B cell (primary cell): ENCODE measurements at regions of chr9 and their contacts with region 1.

Region 1: DNA sequence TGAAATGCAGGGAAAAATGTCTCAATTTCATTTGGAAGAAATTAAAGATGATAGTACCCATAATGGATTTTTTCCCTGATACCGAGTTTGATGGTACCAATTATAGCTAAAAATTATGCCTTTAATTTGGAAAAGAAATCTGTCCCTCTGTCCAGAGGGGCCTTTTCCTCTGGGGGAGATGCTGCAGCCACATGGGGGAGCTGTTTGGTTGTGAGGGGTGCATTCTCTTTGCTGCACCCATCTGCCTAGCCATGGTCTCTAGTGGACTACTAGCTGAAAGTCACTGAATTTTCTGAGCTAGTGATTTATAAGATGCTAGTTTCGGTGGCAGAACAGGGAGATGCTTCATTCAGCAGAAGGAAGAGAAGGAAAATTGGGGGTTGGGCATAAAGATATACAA is 9.6 kb downstream of the SEC61B start:
- DNase-seq: peak; percentile 52
- ATAC-seq: no peak
- H3K4me3 ChIP-seq: no peak overlapping the region
- H3K4me3 Mint-ChIP-seq: no peak overlapping the region
- H3K27ac ChIP-seq: no peak overlapping the region
- H3K27ac Mint-ChIP-seq: no peak overlapping the region
- H3K4me1 ChIP-seq: peaks cover 21 to 23% of the 10 kb centered on the region in 2 donors
- H3K4me1 Mint-ChIP-seq: peaks cover 29% of the 10 kb centered on the region
- H3K27me3 ChIP-seq: no peaks in the 10 kb centered on the region
- H3K27me3 Mint-ChIP-seq: no peaks in the 10 kb centered on the region
- CTCF ChIP-seq: peak; percentile 75

Region 2: GRCh38 chr9:99197987-99198386 is 33.7 kb before region 1 on chr9:
- CTCF ChIA-PET with region 1: interaction called, 10 read pairs
- POLR2A ChIA-PET with region 1: no interaction called
- intact Hi-C with region 1: no loop called
- DNase-seq: no peak
- ATAC-seq: no peak
- H3K4me3 ChIP-seq: no peak overlapping the region
- H3K4me3 Mint-ChIP-seq: no peak overlapping the region
- H3K27ac ChIP-seq: no peak overlapping the region
- H3K27ac Mint-ChIP-seq: no peak overlapping the region
- H3K4me1 ChIP-seq: no peaks in the 10 kb centered on the region
- H3K4me1 Mint-ChIP-seq: peaks cover 8% of the 10 kb centered on the region
- H3K27me3 ChIP-seq: no peaks in the 10 kb centered on the region
- H3K27me3 Mint-ChIP-seq: no peaks in the 10 kb centered on the region
- CTCF ChIP-seq: no peak

Region 3: DNA sequence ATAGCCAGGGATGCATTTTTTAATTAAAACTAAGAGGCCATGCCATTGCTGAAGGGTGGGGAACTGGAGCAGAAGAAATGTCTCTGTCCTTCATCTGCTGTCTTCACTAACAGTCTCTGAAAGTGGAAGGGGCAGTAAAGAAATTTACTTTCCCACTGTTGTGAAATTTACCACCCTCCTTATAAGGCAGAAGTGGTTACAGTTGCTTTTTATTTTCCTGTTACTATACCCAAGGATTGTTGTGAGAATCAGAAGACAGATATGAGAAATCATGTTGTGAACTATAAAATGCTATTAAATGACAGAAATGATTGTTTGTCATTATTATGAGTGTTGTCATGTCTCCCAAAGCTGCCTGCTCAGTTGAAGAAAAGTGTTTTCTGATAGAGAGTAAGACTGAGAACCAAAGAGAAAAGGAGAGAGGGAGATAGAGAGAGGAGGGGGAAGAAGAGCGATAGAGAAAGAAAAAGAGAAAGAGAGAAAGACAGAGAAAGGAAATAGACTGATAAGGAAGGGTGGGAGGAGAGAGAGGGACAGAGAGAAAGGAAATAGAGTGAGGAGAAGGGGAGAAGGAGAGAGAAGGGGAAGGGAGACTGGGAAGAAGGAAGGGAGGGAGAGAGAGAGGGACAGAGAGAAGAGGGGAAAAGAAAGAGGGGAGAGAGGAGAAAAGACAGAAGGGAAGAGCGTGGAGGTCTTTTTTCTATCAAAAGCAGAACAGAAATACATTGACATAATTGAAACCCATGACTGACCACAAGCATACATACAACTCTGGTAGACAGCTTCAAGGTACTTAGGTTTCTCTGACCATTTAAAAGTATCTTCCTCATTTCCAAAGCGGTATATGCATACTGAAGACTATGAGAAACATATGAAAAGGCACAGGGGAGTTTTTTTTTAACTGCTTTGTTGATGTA is 12.9 kb after region 1 on chr9:
- CTCF ChIA-PET with region 1: interaction called, 34 read pairs
- POLR2A ChIA-PET with region 1: no interaction called
- intact Hi-C with region 1: no loop called
- DNase-seq: peak; percentile 55
- ATAC-seq: peak; percentile 87
- H3K4me3 ChIP-seq: no peak overlapping the region
- H3K4me3 Mint-ChIP-seq: peak overlapping the region; percentile 42
- H3K27ac ChIP-seq: peak overlapping the region in 1 of 2 donors; percentile 46
- H3K27ac Mint-ChIP-seq: peak overlapping the region; percentile 46
- H3K4me1 ChIP-seq: peaks cover 4 to 12% of the 10 kb centered on the region in 2 donors
- H3K4me1 Mint-ChIP-seq: peaks cover 16% of the 10 kb centered on the region
- H3K27me3 ChIP-seq: no peaks in the 10 kb centered on the region
- H3K27me3 Mint-ChIP-seq: no peaks in the 10 kb centered on the region
- CTCF ChIP-seq: peak; percentile 28

Region 4: GRCh38 chr9:99259231-99259918 is 27.7 kb after region 1 on chr9:
- CTCF ChIA-PET with region 1: interaction called, 29 read pairs
- POLR2A ChIA-PET with region 1: interaction called, 3 read pairs
- intact Hi-C with region 1: no loop called
- DNase-seq: peak; percentile 51
- ATAC-seq: peak; percentile 57
- H3K4me3 ChIP-seq: peak overlapping the region in 1 of 5 experiments; percentile 17
- H3K4me3 Mint-ChIP-seq: peak overlapping the region; percentile 29
- H3K27ac ChIP-seq: no peak overlapping the region
- H3K27ac Mint-ChIP-seq: peak overlapping the region; percentile 75
- H3K4me1 ChIP-seq: peaks cover 0 to 9% of the 10 kb centered on the region in 2 donors
- H3K4me1 Mint-ChIP-seq: peaks cover 31% of the 10 kb centered on the region
- H3K27me3 ChIP-seq: no peaks in the 10 kb centered on the region
- H3K27me3 Mint-ChIP-seq: no peaks in the 10 kb centered on the region
- CTCF ChIP-seq: no peak

Region 5: GRCh38 chr9:99299211-99300102 is 67.7 kb after region 1 on chr9:
- CTCF ChIA-PET with region 1: interaction called, 10 read pairs
- POLR2A ChIA-PET with region 1: no interaction called
- intact Hi-C with region 1: no loop called
- DNase-seq: peak; percentile 17
- ATAC-seq: no peak
- H3K4me3 ChIP-seq: no peak overlapping the region
- H3K4me3 Mint-ChIP-seq: no peak overlapping the region
- H3K27ac ChIP-seq: no peak overlapping the region
- H3K27ac Mint-ChIP-seq: no peak overlapping the region
- H3K4me1 ChIP-seq: peaks cover 18 to 24% of the 10 kb centered on the region in 2 donors
- H3K4me1 Mint-ChIP-seq: peaks cover 12% of the 10 kb centered on the region
- H3K27me3 ChIP-seq: no peaks in the 10 kb centered on the region
- H3K27me3 Mint-ChIP-seq: peaks cover 6% of the 10 kb centered on the region
- CTCF ChIP-seq: no peak

Region 6: GRCh38 chr9:100286257-100286656 is 1054.5 kb after region 1 on chr9:
- CTCF ChIA-PET with region 1: no interaction called
- POLR2A ChIA-PET with region 1: no interaction called
- intact Hi-C with region 1: no loop called
- DNase-seq: no peak
- ATAC-seq: no peak
- H3K4me3 ChIP-seq: no peak overlapping the region
- H3K4me3 Mint-ChIP-seq: no peak overlapping the region
- H3K27ac ChIP-seq: no peak overlapping the region
- H3K27ac Mint-ChIP-seq: no peak overlapping the region
- H3K4me1 ChIP-seq: no peaks in the 10 kb centered on the region
- H3K4me1 Mint-ChIP-seq: no peaks in the 10 kb centered on the region
- H3K27me3 ChIP-seq: no peaks in the 10 kb centered on the region
- H3K27me3 Mint-ChIP-seq: no peaks in the 10 kb centered on the region
- CTCF ChIP-seq: no peak